ENCODE measurements at regions of chr6 and their contacts with region 1.

Region 1: DNA sequence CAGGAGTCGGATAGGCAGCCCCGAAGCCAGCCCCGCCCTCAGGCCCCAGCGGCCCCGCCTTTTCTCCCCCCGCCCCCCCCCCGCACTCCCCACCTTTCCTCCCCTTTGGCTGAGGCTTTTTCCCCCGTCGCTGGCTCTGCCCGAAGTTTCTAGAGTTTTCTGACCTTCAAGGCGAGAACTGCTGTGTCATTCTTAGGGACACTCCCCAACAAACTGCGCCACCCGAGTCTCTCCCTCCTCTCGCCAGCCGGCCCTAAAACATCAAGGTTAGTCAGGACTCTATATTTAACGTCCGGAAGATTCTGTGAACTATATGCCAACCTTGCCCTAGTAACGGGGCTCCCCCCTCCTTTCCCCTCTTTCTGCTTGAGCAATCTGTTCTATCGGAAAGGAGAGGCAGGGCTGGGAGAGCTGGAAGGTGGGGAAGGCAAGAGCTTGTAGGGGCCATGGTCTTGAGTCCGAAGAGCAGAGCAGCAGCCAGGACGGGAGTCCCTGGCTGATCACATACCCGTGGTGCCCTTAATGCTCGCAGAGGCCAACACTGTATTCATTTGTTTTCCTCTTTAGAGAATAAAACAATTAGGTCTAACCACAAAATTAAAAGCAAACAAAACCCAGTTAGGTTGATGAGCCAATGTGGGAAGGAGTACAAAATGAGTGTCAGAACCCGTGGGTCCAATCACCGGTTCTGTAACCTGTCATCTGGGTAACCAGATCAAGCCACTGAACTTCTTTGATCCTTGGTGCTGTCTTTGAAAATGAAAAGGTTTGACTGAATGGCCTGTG is 5.3 kb upstream of the HSPA1B start:
- DNase-seq: peak; percentile 50

Region 2: GRCh38 chr6:31723245-31723979 is 98.8 kb before region 1 on chr6 and contains the start of gene MPIG6B:
- CTCF ChIA-PET with region 1: no interaction called
- POLR2A ChIA-PET with region 1: no interaction called
- DNase-seq: no peak

Region 3: GRCh38 chr6:31806465-31807272 is 15.6 kb before region 1 on chr6 and contains the start of gene LSM2:
- CTCF ChIA-PET with region 1: interaction called, 4 read pairs
- POLR2A ChIA-PET with region 1: interaction called, 104 read pairs
- DNase-seq: peak; percentile 100

Region 4: DNA sequence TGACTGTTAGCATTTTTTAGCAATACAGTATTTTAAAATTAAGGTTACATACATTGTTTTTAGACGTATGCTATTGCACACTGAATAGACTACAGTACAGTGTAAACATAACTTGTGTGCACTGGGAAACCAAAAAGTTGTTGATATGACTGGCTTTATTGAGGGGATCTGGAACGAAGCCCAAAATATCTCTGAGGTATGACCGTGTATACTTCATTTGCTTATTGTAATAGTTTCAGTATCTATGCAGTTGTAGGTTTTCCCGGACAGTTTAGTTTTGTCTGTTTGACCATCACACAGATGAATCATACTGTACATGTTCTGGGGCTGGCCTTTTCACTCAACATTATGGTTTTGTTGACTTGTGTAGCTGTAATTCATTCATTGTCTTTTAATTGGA is 86.6 kb after region 1 on chr6:
- CTCF ChIA-PET with region 1: no interaction called
- POLR2A ChIA-PET with region 1: no interaction called
- DNase-seq: no peak

Measured in HEK293T (cell line).